A673 (cell line): ENCODE measurements at regions of chr3 and their contacts with region 1.

Region 1: GRCh38 chr3:9476935-9477334 is 76.7 kb downstream of the LHFPL4 start:
- DNase-seq: no peak
- H3K4me3 ChIP-seq: no peak overlapping the region
- H3K27ac ChIP-seq: no peak overlapping the region
- H3K4me1 ChIP-seq: no peaks in the 10 kb centered on the region
- H3K27me3 ChIP-seq: no peaks in the 10 kb centered on the region
- CTCF ChIP-seq: no peak

Region 2: GRCh38 chr3:8891774-8892173 is 585.2 kb before region 1 on chr3:
- CTCF ChIA-PET with region 1: no interaction called
- POLR2A ChIA-PET with region 1: no interaction called
- intact Hi-C with region 1: no loop called
- DNase-seq: no peak
- H3K4me3 ChIP-seq: no peak overlapping the region
- H3K27ac ChIP-seq: no peak overlapping the region
- H3K4me1 ChIP-seq: no peaks in the 10 kb centered on the region
- H3K27me3 ChIP-seq: no peaks in the 10 kb centered on the region
- CTCF ChIP-seq: no peak

Region 3: DNA sequence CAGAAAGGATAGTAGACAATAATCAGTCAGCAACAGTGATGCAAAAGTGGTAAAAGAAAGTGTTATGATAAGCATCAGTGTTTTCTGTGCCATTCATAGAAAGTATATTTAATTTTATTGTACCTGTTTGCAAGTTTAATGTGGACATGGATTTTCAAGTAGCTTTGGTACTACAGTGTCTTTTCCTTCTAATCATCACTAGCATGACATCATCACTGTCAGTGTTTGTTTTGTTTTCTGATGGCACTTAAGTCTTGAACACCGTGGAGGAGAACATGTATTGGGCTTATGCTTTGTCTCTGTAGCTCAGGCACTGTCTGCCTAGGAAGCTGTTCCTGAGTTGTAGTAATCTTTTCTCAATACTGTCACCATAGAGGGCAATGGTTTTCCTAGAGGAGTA is 37.6 kb before region 1 on chr3:
- CTCF ChIA-PET with region 1: no interaction called
- POLR2A ChIA-PET with region 1: no interaction called
- intact Hi-C with region 1: loop called (anchors 5 kb)
- DNase-seq: no peak
- H3K4me3 ChIP-seq: no peak overlapping the region
- H3K27ac ChIP-seq: no peak overlapping the region
- H3K4me1 ChIP-seq: no peaks in the 10 kb centered on the region
- H3K27me3 ChIP-seq: no peaks in the 10 kb centered on the region
- CTCF ChIP-seq: no peak